Endothelial cell of umbilical vein (primary cell): ENCODE measurements at regions of chr6 and their contacts with region 1.

Region 1: GRCh38 chr6:136317021-136317694 is 27.5 kb upstream of the BCLAF1 start:
- DNase-seq: peak; percentile 59
- H3K4me3 ChIP-seq: no peak overlapping the region
- H3K27ac ChIP-seq: no peak overlapping the region
- H3K4me1 ChIP-seq: no peaks in the 10 kb centered on the region
- H3K27me3 ChIP-seq: peaks cover 5 to 7% of the 10 kb centered on the region in 2 experiments
- CTCF ChIP-seq: peak; percentile 69 to 74
- POLR2A ChIP-seq: no peak

Region 2: GRCh38 chr6:135451693-135452092 is 865.5 kb before region 1 on chr6:
- CTCF ChIA-PET with region 1: interaction called, 19 read pairs
- POLR2A ChIA-PET with region 1: no interaction called
- dilution Hi-C with region 1: no loop called
- intact Hi-C with region 1: loop called (anchors 1 kb)
- DNase-seq: peak; percentile 63
- H3K4me3 ChIP-seq: no peak overlapping the region
- H3K27ac ChIP-seq: no peak overlapping the region
- H3K4me1 ChIP-seq: no peaks in the 10 kb centered on the region
- H3K27me3 ChIP-seq: no peaks in the 10 kb centered on the region
- CTCF ChIP-seq: peak; percentile 35 to 42
- POLR2A ChIP-seq: no peak

Region 3: GRCh38 chr6:135506270-135506997 is 810.7 kb before region 1 on chr6:
- CTCF ChIA-PET with region 1: interaction called, 12 read pairs
- POLR2A ChIA-PET with region 1: no interaction called
- dilution Hi-C with region 1: no loop called
- intact Hi-C with region 1: loop called (anchors 1 kb)
- DNase-seq: peak; percentile 61
- H3K4me3 ChIP-seq: no peak overlapping the region
- H3K27ac ChIP-seq: no peak overlapping the region
- H3K4me1 ChIP-seq: no peaks in the 10 kb centered on the region
- H3K27me3 ChIP-seq: no peaks in the 10 kb centered on the region
- CTCF ChIP-seq: peak; percentile 32 to 39
- POLR2A ChIP-seq: no peak

Region 4: GRCh38 chr6:135675862-135676261 is 641.3 kb before region 1 on chr6:
- CTCF ChIA-PET with region 1: no interaction called
- POLR2A ChIA-PET with region 1: no interaction called
- dilution Hi-C with region 1: no loop called
- intact Hi-C with region 1: loop called (anchors 1 kb)
- DNase-seq: peak; percentile 63
- H3K4me3 ChIP-seq: no peak overlapping the region
- H3K27ac ChIP-seq: no peak overlapping the region
- H3K4me1 ChIP-seq: no peaks in the 10 kb centered on the region
- H3K27me3 ChIP-seq: no peaks in the 10 kb centered on the region
- CTCF ChIP-seq: peak in 1 of 2 donors; percentile 8
- POLR2A ChIP-seq: no peak

Region 5: GRCh38 chr6:136249811-136250685 is 67.1 kb before region 1 on chr6 and contains the start of gene MTFR2:
- CTCF ChIA-PET with region 1: interaction called, 20 read pairs
- POLR2A ChIA-PET with region 1: no interaction called
- dilution Hi-C with region 1: no loop called
- intact Hi-C with region 1: no loop called
- DNase-seq: peak; percentile 99
- H3K4me3 ChIP-seq: peak within 1 kb of the TSS; percentile 49 to 97 (median 85)
- H3K27ac ChIP-seq: peak within 1 kb of the TSS; percentile 1
- H3K4me1 ChIP-seq: peaks cover 12% of the 10 kb centered on the region
- H3K27me3 ChIP-seq: no peaks in the 10 kb centered on the region
- CTCF ChIP-seq: no peak
- POLR2A ChIP-seq: peak; percentile 74
- total RNA-seq, gene MTFR2: 7.4 and 7.7 TPM in 2 replicates

Region 6: DNA sequence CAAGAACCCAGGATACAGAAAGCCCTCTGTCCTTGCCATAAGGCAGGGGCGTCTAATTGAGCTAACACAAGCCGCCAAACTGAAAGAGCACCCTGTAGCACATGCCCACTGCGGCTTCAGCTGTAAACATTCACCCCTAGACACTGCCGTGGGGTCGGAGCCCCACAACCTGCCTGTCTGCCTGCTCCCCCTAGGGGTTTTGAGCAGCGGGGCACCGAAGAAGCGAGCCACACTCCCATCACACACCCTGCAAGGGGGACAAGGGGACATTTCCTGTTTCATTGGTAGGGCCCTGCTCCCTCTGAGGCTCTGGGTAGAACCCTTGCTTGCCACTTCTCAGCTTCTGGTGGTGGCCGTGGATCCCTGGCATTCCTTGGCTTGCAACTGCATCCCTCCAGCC is 17.7 kb after region 1 on chr6:
- CTCF ChIA-PET with region 1: interaction called, 18 read pairs
- POLR2A ChIA-PET with region 1: no interaction called
- dilution Hi-C with region 1: no loop called
- intact Hi-C with region 1: no loop called
- DNase-seq: no peak
- H3K4me3 ChIP-seq: no peak overlapping the region
- H3K27ac ChIP-seq: no peak overlapping the region
- H3K4me1 ChIP-seq: no peaks in the 10 kb centered on the region
- H3K27me3 ChIP-seq: peaks cover 0 to 2% of the 10 kb centered on the region in 2 experiments
- CTCF ChIP-seq: no peak
- POLR2A ChIP-seq: no peak